ENCODE measurements at regions of chr10 and their contacts with region 1.

Region 1: DNA sequence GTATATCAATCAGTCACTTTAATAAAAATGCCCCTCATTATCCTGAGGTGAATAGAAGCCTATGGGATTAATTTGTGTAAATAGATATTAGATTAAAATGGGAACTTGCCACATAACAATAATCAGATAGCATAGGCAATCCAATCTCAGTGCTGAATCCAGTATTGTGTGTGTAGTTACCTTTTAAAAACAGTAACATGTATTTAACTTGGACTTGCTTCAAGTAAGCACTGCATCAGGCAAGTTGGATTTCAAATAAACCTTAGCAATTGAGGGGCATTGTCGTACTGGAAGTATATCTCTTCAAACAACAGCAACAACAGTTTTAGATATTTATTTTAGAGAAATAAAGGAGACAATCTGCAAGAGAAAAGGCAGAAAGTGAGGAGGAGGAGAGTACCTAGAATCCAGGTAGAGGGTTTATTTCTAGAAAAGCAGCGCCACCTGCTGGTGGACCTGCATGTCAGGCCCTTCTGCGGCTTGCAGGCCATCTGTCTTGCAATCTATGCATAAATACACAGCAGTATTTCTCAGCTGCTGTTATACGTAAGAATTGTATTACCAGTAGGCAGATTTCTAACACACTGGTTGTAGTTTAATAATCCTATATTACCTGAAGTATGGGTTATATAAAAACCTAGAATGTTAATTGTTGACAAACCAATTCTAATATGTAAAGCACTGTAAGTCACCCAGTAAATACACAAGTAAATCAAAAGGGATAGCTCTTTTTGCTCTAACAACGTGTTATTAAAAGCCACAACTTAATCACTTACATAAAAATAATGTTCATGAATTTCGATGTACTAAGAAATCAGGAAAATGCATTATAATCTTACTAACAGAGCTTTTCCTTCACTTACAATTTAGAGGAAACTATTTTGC is 652.8 kb downstream of the KCNMA1 start:
- DNase-seq: peak; percentile 14
- H3K4me3 ChIP-seq: no peak overlapping the region
- CTCF ChIP-seq: peak; percentile 84

Region 2: GRCh38 chr10:76973515-76974278 is 11.1 kb before region 1 on chr10:
- CTCF ChIA-PET with region 1: interaction called, 74 read pairs
- POLR2A ChIA-PET with region 1: no interaction called
- DNase-seq: no peak
- H3K4me3 ChIP-seq: no peak overlapping the region
- CTCF ChIP-seq: no peak

Region 3: GRCh38 chr10:76998451-76998850 is 13.7 kb after region 1 on chr10:
- CTCF ChIA-PET with region 1: interaction called, 15 read pairs
- POLR2A ChIA-PET with region 1: no interaction called
- DNase-seq: no peak
- H3K4me3 ChIP-seq: no peak overlapping the region
- CTCF ChIP-seq: no peak

Region 4: GRCh38 chr10:77400033-77400432 is 415.2 kb after region 1 on chr10:
- CTCF ChIA-PET with region 1: no interaction called
- POLR2A ChIA-PET with region 1: no interaction called
- DNase-seq: no peak
- H3K4me3 ChIP-seq: no peak overlapping the region
- CTCF ChIP-seq: no peak